Activated B cell treated with CpG ODN at 0.5 μM for 24 hours (primary cell): ENCODE measurements at regions of chr14 and their contacts with region 1.

Region 1: DNA sequence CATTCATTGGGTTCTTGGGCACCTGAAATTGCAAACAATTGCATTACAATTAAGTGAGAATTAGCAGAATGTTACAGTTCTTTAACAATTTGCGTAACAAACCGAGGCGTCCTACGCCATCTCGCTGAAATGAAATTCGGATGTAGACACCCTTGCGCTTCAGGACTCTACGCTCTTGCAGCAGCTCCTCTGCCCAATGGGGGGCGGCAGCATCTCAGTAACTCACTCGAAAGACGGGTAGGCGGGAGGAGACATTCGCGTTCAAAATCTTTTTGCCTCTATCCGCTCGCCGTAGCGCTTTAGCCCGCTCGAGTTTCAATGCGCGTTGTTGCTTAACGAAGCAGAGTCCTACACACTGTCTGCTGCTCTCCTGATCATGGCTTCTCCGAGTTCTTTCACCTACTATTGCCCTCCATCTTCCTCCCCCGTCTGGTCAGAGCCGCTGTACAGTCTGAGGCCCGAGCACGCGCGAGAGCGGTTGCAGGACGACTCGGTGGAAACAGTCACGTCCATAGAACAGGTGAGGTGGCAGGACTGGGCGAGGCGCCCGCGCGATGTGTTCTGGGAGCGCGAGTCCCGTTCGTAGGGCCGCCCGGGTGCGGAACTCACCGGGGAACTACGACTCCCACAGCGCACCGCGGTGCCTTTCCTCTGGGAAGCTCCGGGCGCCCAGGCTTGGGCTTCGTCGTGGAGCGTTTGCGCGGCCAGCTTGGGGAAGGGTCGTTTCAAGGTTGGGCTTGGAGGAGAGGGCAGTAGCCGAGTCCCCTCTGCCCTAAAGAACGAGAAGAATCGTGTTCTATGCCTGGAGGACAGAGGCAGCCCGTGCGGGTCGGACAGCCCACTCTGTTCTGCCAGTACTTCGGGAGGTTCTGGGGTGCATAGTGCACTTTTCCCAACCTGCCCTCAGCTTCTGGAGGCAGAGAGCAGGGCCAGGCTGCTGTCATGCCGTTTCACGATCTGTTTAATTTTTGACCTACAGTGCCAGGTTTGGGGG is at the start of gene FNTB:
- DNase-seq: peak; percentile 88
- ATAC-seq: peak; percentile 93
- H3K4me3 Mint-ChIP-seq: peak within 1 kb of the TSS; percentile 99
- H3K27ac Mint-ChIP-seq: peak within 1 kb of the TSS; percentile 99
- H3K4me1 Mint-ChIP-seq: peaks cover 34% of the 10 kb centered on the region
- H3K27me3 Mint-ChIP-seq: peaks cover 14% of the 10 kb centered on the region
- CTCF ChIP-seq: no peak
- total RNA-seq, gene FNTB: 7.9 and 10.5 TPM in 2 replicates

Region 2: DNA sequence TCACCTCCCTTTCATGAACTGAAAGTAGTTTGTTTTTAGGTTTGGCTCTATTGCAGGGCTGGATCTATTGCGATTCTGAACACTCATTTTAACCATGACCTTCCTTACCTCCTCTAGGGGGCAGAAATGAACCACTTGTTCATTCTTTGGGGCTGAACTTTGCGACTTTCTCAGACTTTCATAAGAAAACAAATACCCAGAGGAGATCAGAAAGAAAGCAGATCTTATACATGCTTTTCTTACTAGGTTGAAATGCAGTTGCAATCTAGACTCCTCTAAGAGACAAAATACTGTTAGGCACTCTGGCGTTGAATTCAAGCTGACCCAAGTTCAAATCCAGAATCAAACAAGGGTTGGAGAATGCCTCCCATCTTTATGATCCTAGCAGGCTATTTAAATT is 315.3 kb before region 1 on chr14:
- CTCF ChIA-PET with region 1: no interaction called
- POLR2A ChIA-PET with region 1: no interaction called
- intact Hi-C with region 1: loop called (anchors 2 kb)
- DNase-seq: no peak
- ATAC-seq: no peak
- H3K4me3 Mint-ChIP-seq: no peak overlapping the region
- H3K27ac Mint-ChIP-seq: no peak overlapping the region
- H3K4me1 Mint-ChIP-seq: peaks cover 4% of the 10 kb centered on the region
- H3K27me3 Mint-ChIP-seq: peaks cover 18% of the 10 kb centered on the region
- CTCF ChIP-seq: no peak

Region 3: GRCh38 chr14:64823305-64823861 is 163.5 kb before region 1 on chr14:
- CTCF ChIA-PET with region 1: interaction called, 4 read pairs
- POLR2A ChIA-PET with region 1: no interaction called
- intact Hi-C with region 1: loop called (anchors 1 kb)
- DNase-seq: peak; percentile 46
- ATAC-seq: peak; percentile 81
- H3K4me3 Mint-ChIP-seq: peak overlapping the region; percentile 42
- H3K27ac Mint-ChIP-seq: no peak overlapping the region
- H3K4me1 Mint-ChIP-seq: peaks cover 4% of the 10 kb centered on the region
- H3K27me3 Mint-ChIP-seq: peaks cover 20% of the 10 kb centered on the region
- CTCF ChIP-seq: no peak

Region 4: DNA sequence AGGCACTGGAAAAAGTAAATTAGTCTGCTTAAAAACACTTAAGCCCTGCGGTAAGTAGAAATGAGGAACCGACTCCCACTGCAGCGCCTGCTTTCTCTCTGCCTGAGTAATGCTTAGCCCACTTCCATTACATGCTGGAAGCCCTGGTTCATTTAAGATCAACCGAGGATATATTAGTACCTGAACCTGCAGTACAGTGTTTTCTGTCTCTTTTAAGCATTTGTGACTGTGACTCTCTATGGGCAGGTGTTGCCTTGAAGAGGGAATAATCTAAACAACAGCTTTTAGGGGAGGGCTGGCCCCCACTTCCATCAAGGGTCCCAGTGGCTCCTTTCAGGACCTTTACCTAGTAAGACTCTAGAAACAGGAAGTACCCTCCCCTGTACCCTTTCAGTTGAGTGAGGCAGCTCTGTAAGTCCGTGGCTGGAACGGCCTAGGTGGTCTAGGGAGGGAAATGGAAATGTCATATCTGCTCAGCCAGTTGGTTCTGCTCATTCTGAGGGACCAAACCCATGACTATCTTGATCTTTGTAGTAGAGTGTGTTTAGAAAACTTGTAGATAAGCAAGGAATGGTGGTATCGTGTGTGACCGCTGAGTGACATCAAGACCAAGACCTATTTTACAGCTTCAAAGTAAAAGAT is 56.0 kb after region 1 on chr14:
- CTCF ChIA-PET with region 1: no interaction called
- POLR2A ChIA-PET with region 1: no interaction called
- intact Hi-C with region 1: loop called (anchors 2 kb)
- DNase-seq: no peak
- ATAC-seq: peak; percentile 90
- H3K4me3 Mint-ChIP-seq: no peak overlapping the region
- H3K27ac Mint-ChIP-seq: peak overlapping the region; percentile 56
- H3K4me1 Mint-ChIP-seq: peaks cover 10% of the 10 kb centered on the region
- H3K27me3 Mint-ChIP-seq: no peaks in the 10 kb centered on the region
- CTCF ChIP-seq: no peak

Region 5: GRCh38 chr14:65206448-65207096 is 219.7 kb after region 1 on chr14:
- CTCF ChIA-PET with region 1: no interaction called
- POLR2A ChIA-PET with region 1: interaction called, 12 read pairs
- intact Hi-C with region 1: loop called (anchors 2 kb)
- DNase-seq: no peak
- ATAC-seq: peak; percentile 60
- H3K4me3 Mint-ChIP-seq: peak overlapping the region; percentile 76
- H3K27ac Mint-ChIP-seq: peak overlapping the region; percentile 96
- H3K4me1 Mint-ChIP-seq: peaks cover 89% of the 10 kb centered on the region
- H3K27me3 Mint-ChIP-seq: no peaks in the 10 kb centered on the region
- CTCF ChIP-seq: no peak

Region 6: DNA sequence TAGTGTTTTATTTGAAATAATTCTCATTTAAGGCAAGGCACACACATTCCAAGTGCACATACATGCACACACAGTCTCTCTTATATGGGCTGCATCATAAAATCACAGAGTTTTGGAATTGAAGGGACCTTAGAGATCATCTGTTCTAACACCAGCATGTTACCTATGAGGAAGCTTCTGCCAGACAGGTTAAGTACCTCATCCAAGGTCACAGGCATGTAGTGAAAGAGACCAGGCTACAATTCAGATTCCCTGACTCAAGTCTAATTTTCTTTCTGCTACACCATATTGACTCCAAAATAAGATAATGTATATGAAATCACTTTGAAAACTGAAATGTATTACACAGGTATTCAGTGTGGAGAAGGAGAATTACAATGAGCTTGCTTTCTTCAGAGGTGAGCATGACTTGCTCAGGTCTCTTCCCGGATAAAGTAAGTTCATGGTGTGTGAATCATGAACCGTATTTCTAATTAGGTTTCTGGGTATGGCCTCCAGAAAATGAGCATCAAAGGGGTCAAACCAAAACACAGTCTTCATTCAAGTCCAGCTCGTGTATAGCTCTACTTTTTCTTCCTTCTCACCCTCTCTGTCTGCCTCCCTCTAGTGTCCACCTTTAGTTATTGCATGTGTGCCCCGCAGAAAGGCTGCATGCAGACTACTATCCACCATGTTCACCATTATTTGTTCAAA is 837.6 kb after region 1 on chr14:
- CTCF ChIA-PET with region 1: interaction called, 21 read pairs
- POLR2A ChIA-PET with region 1: interaction called, 5 read pairs
- intact Hi-C with region 1: loop called (anchors 2 kb)
- DNase-seq: no peak
- ATAC-seq: peak; percentile 99
- H3K4me3 Mint-ChIP-seq: no peak overlapping the region
- H3K27ac Mint-ChIP-seq: no peak overlapping the region
- H3K4me1 Mint-ChIP-seq: peaks cover 1% of the 10 kb centered on the region
- H3K27me3 Mint-ChIP-seq: peaks cover 5% of the 10 kb centered on the region
- CTCF ChIP-seq: peak; percentile 82

Region 7: DNA sequence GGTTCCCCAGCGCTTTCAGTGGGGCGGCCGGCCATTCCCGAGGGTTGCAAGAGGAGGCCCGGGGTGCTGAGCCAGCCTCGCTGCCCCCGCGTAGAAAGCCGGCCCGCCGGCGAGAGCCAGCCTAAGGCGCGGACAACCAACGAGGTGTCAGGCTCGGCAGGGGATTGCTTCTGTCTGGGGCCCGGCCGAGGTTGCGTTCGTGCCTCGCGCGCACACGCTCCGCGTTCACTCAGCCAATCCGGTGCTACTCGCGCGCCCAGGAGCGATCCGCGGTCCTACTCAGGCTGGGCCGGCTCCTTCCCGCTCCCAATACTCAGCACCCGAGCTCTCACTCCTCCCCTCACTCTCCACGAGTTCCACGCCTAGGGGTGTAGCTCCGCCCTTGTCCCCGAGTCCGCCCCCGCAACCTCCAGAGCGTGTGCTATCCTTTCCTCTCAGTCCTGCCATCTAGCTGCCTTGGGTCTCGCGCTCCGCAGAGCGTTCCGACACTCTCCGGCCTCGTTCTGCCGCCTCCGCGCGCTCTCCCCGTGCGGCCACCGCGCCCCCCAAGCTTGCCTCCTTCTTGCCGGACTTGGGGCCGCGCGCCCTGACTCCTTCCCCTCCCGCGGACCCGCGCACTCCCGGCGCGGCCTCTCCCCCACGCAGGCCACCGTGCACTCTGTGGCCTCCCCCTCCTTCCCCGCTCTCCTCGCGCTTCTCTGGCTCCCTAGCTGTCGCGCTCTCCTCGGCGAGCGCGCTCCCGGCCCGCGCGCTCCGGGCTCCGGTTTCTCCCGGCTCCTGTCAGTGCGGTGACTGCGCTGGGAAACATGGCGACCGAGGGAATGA is 1521.1 kb after region 1 on chr14 and contains the start of gene GPHN:
- CTCF ChIA-PET with region 1: no interaction called
- POLR2A ChIA-PET with region 1: no interaction called
- intact Hi-C with region 1: loop called (anchors 5 kb)
- DNase-seq: peak; percentile 75
- ATAC-seq: peak; percentile 85
- H3K4me3 Mint-ChIP-seq: peak within 1 kb of the TSS; percentile 97
- H3K27ac Mint-ChIP-seq: peak within 1 kb of the TSS; percentile 86
- H3K4me1 Mint-ChIP-seq: peaks cover 23% of the 10 kb centered on the region
- H3K27me3 Mint-ChIP-seq: peaks cover 6% of the 10 kb centered on the region
- CTCF ChIP-seq: no peak
- total RNA-seq, gene GPHN: 36.9 and 40.8 TPM in 2 replicates